HCT116 (cell line): ENCODE measurements at regions of chr1 and their contacts with region 1.

Region 1: GRCh38 chr1:223700942-223701637 is 11.2 kb upstream of the CAPN2 start:
- DNase-seq: peak; percentile 90
- ATAC-seq: peak; percentile 79
- H3K4me3 ChIP-seq: peak overlapping the region; percentile 25 to 53
- H3K27ac ChIP-seq: peak overlapping the region; percentile 87
- H3K4me1 ChIP-seq: peaks cover 40 to 80% of the 10 kb centered on the region in 2 experiments
- H3K27me3 ChIP-seq: no peaks in the 10 kb centered on the region
- CTCF ChIP-seq: no peak
- POLR2A ChIP-seq: no peak
- RAD21 ChIP-seq: no peak

Region 2: DNA sequence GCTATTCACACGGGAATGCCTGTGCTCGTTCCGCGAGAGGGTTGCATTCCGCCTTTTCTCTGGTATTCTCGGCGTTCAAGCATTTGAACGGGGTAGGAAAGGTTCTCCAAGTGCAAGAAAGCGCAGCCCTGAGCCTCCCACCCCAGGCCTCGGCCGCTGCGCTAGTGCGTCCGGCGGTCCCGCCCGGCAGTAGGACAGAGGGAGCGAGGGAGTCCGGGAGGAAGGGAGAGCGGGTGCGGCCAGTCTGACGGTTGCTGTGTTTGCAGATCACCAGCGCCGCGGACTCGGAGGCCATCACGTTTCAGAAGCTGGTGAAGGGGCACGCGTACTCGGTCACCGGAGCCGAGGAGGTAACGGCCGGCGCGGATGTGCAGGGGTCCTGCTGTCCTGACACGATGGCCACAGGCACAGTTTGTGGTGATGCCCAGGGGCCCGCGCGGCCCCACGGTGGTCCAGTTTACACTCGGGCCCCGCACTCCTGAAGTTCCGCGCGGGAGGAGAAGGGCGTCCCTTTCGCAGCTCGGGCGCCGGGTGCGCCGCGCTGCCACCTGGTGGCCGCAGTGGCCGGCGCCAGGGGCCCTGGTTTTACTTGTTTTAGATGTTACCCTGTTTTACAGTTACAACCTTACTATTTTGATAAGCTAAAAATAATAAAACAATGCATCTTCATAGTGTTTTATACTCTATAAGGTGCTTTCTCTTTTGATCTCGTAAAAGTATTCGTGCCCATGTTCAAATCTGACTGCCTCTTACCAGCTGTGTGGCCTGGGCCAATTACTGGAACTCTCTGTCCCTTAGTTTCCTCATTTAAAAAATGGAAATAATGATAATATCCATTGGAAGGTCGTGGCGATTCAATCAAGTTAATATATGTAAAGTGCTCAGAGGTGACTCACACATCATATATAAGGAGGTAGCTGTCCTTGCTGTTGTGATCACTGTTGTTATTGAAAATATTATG is 48.0 kb after region 1 on chr1:
- CTCF ChIA-PET with region 1: interaction called, 10 read pairs
- POLR2A ChIA-PET with region 1: interaction called, 4 read pairs
- RAD21 ChIA-PET with region 1: interaction called, 3 to 6 read pairs
- intact Hi-C with region 1: loop called (anchors 1 kb)
- DNase-seq: no peak
- ATAC-seq: peak; percentile 85
- H3K4me3 ChIP-seq: no peak overlapping the region
- H3K27ac ChIP-seq: no peak overlapping the region
- H3K4me1 ChIP-seq: no peaks in the 10 kb centered on the region
- H3K27me3 ChIP-seq: no peaks in the 10 kb centered on the region
- CTCF ChIP-seq: peak; percentile 73 to 91 (median 90); a peak in 5 of 6 replicates
- POLR2A ChIP-seq: no peak
- RAD21 ChIP-seq: peak; percentile 77

Region 3: GRCh38 chr1:223845810-223846682 is 145.0 kb after region 1 on chr1 and contains the start of gene TP53BP2:
- CTCF ChIA-PET with region 1: no interaction called
- POLR2A ChIA-PET with region 1: no interaction called
- RAD21 ChIA-PET with region 1: no interaction called
- intact Hi-C with region 1: loop called (anchors 5 kb)
- DNase-seq: peak; percentile 73
- ATAC-seq: peak; percentile 89
- H3K4me3 ChIP-seq: peak within 1 kb of the TSS; percentile 73 to 78
- H3K27ac ChIP-seq: peak within 1 kb of the TSS; percentile 94
- H3K4me1 ChIP-seq: peaks cover 3 to 23% of the 10 kb centered on the region in 2 experiments; a peak in 3 of 4 replicates
- H3K27me3 ChIP-seq: no peaks in the 10 kb centered on the region
- CTCF ChIP-seq: peak; percentile 38 to 70 (median 55); a peak in 5 of 6 replicates
- POLR2A ChIP-seq: peak; percentile 39
- RAD21 ChIP-seq: peak; percentile 60
- total RNA-seq, gene TP53BP2: 38.2 TPM

Region 4: GRCh38 chr1:224051086-224051406 is 350.0 kb after region 1 on chr1:
- CTCF ChIA-PET with region 1: interaction called, 5 read pairs
- POLR2A ChIA-PET with region 1: no interaction called
- RAD21 ChIA-PET with region 1: no interaction called
- intact Hi-C with region 1: loop called (anchors 1 kb)
- DNase-seq: no peak
- ATAC-seq: no peak
- H3K4me3 ChIP-seq: no peak overlapping the region
- H3K27ac ChIP-seq: no peak overlapping the region
- H3K4me1 ChIP-seq: peaks cover 0 to 11% of the 10 kb centered on the region in 2 experiments; a peak in 2 of 4 replicates
- H3K27me3 ChIP-seq: no peaks in the 10 kb centered on the region
- CTCF ChIP-seq: no peak
- POLR2A ChIP-seq: no peak
- RAD21 ChIP-seq: no peak

Region 5: GRCh38 chr1:224329842-224330753 is 629.0 kb after region 1 on chr1 and contains the start of gene NVL:
- CTCF ChIA-PET with region 1: no interaction called
- POLR2A ChIA-PET with region 1: no interaction called
- RAD21 ChIA-PET with region 1: no interaction called
- intact Hi-C with region 1: loop called (anchors 1 kb)
- DNase-seq: peak; percentile 86
- ATAC-seq: peak; percentile 89
- H3K4me3 ChIP-seq: peak within 1 kb of the TSS; percentile 93 to 99
- H3K27ac ChIP-seq: peak within 1 kb of the TSS; percentile 82
- H3K4me1 ChIP-seq: peaks cover 12 to 16% of the 10 kb centered on the region in 2 experiments
- H3K27me3 ChIP-seq: no peaks in the 10 kb centered on the region
- CTCF ChIP-seq: no peak
- POLR2A ChIP-seq: peak; percentile 15
- RAD21 ChIP-seq: peak; percentile 31; the same call in 1 of the 2 replicates
- total RNA-seq, gene NVL: 21.9 TPM